ENCODE measurements at regions of chr19 and their contacts with region 1.

Region 1: DNA sequence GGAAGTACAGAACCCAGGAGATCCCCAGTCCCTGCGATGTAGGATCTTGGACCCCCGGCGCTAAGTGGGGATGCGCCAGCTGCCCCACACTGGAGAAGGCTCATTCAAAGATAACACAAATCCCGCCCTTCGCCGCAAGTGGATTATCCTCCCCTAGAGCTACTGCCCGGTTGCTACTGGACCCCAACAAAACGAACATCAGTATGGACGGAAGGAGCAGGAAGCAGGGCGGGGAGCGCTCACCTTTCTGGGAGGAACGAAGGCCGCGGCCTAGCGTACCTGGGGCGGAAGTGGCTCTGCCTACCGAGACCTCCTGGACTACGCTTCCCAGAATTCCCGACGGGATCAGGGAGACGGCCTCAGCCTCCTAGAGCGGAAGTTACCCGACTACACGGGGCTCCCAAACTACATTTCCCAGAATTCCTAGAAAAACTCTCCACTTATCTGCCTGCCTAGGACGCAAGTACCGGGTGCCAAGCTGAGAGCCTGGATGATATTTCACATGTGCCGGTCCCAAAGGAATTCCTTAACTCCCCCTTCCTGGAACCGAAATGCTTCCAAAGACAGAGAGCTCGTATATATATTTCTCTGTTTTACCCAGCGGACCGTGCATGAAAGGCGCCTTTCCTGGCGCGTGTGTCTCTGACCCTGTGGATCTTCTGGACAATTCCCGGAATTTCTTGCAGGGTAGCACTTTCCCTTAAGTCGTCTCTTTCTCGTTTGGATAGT is at the start of gene ZNF112:
- DNase-seq: peak; percentile 93
- H3K4me3 ChIP-seq: peak within 1 kb of the TSS; percentile 41 to 60 (median 58)
- H3K27ac ChIP-seq: no peak within 1 kb of the TSS
- H3K4me1 ChIP-seq: peaks cover 4% of the 10 kb centered on the region
- H3K27me3 ChIP-seq: no peaks in the 10 kb centered on the region
- CTCF ChIP-seq: no peak
- POLR2A ChIP-seq: peak; percentile 56
- total RNA-seq, gene ZNF112: 4.6 and 7.5 TPM in 2 replicates

Region 2: DNA sequence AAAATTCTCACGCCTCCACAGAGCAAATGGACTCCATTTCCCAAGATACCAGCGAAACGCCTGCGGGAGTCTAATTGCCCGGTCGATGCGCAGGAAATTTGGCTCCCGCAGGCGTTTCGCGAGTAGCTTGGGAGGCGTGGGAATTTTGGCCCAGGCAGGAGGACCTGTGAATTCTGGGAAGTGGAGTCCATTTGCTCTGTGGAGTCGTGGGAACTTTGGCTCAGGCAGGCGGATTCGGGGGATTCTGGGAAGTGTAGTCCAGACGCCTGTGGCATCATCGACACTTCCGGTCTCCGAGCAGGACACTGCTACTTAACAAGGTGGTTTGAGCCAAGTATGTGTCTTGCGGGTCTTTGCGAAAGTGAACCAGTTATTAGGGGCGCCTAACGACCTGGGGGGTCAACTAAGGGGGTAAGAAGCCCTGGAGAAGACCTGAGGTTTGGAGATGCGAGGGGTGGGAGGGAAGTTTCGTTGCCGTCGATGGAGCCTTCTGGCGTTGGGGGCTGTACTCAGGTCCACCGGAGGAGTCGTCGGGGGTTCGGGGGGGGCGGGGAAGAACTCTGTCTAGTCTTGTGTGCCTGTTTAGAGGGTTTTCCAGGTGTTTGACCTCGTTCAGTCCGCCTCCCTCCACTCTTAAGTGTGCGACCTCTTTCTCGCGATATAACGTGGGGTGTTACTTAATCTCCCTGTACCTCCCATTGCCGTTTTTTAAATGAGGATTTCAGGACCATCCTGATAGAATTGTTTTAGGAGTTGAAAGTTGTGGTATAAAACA is 372.4 kb before region 1 on chr19 and contains the start of gene ZNF155:
- CTCF ChIA-PET with region 1: no interaction called
- POLR2A ChIA-PET with region 1: no interaction called
- dilution Hi-C with region 1: no loop called
- intact Hi-C with region 1: loop called (anchors 1 kb)
- DNase-seq: peak; percentile 95
- H3K4me3 ChIP-seq: peak within 1 kb of the TSS; percentile 32 to 75 (median 68)
- H3K27ac ChIP-seq: peak within 1 kb of the TSS; percentile 23
- H3K4me1 ChIP-seq: peaks cover 6% of the 10 kb centered on the region
- H3K27me3 ChIP-seq: no peaks in the 10 kb centered on the region
- CTCF ChIP-seq: no peak
- POLR2A ChIP-seq: peak; percentile 39
- total RNA-seq, gene ZNF155: 5.9 and 7.6 TPM in 2 replicates

Region 3: DNA sequence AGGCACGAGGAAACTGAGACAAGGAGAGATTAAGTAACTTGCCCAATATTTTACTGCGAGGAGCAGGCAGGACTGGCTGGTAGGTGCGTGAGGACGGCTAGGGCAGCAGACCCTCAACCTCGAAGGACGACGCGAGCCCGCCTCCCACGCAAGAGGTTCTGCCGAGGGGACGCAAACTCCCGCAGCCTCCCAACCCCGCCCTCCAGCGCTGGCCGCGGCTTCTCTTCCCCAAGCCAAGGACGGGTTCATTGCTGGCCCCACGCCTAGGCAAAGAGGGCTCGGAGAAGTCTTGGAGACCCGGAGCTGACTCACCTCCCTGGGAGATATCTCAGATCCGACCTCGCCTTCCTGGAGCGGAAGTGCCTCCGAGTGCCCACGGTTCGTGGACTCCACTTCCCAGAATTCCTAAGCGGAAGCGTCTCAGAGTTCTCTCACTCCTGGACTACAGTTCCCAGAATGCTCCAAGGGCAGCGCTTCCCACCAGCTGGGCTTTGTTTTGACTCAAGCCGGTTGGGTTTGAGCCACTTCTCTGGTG is 51.8 kb before region 1 on chr19 and contains the start of gene ZNF235:
- CTCF ChIA-PET with region 1: no interaction called
- POLR2A ChIA-PET with region 1: no interaction called
- dilution Hi-C with region 1: no loop called
- intact Hi-C with region 1: loop called (anchors 1 kb)
- DNase-seq: peak; percentile 97
- H3K4me3 ChIP-seq: peak within 1 kb of the TSS; percentile 76 to 95 (median 82)
- H3K27ac ChIP-seq: peak within 1 kb of the TSS; percentile 63
- H3K4me1 ChIP-seq: peaks cover 5% of the 10 kb centered on the region
- H3K27me3 ChIP-seq: no peaks in the 10 kb centered on the region
- CTCF ChIP-seq: no peak
- POLR2A ChIP-seq: peak; percentile 51
- total RNA-seq, gene ZNF235: 5.2 TPM in 2 replicates

Region 4: GRCh38 chr19:44374789-44375188 is 18.2 kb after region 1 on chr19:
- CTCF ChIA-PET with region 1: no interaction called
- POLR2A ChIA-PET with region 1: no interaction called
- dilution Hi-C with region 1: no loop called
- intact Hi-C with region 1: no loop called
- DNase-seq: no peak
- H3K4me3 ChIP-seq: no peak overlapping the region
- H3K27ac ChIP-seq: no peak overlapping the region
- H3K4me1 ChIP-seq: no peaks in the 10 kb centered on the region
- H3K27me3 ChIP-seq: no peaks in the 10 kb centered on the region
- CTCF ChIP-seq: no peak
- POLR2A ChIP-seq: no peak

Region 5: DNA sequence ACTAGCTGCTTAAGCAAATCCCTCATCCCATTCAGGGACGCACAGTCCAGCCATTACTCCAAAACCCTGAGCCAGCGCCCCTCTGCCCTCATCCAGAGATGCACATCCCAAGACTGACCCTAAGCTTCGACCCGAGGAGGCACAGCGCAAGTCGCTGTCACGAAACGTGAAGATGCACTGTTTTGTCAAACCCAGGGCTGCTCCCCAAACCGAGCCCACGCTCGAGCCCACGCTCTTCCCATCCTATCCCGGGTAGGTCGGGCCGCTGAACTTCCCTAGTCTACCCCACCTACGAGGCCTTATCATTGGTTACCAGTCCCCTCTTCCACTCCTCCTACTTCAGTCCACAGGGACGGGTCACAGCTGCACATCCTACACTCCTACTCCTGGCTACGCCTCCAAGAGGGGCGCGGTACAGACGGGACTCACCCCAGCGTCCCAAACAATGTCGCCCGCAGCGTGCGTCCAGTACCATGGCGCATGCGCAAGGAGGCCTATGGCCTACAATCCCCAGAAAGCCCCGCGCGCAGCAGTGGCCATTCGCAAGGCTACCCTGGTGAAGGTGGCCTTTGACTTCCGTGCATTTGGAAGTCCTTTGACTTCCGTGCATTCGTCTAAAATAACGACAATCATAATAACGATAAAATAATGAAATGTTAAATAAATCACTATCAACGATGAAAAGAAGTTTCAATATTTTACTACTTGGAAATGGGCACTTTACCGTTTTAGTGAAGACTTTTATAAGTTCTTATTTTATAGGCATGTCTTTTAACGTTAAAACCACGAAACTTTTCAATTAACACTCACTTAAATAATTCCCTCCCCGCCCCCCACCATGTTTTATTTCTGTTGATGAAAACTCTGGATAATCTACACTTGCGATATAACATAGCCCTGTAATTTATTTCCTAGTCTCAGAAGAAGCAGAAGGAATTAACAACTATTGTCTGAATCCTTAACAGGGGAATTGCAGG is 44.9 kb after region 1 on chr19 and contains the start of gene ZNF285:
- CTCF ChIA-PET with region 1: no interaction called
- POLR2A ChIA-PET with region 1: no interaction called
- dilution Hi-C with region 1: no loop called
- intact Hi-C with region 1: loop called (anchors 1 kb)
- DNase-seq: peak; percentile 98
- H3K4me3 ChIP-seq: peak within 1 kb of the TSS; percentile 46 to 66 (median 55)
- H3K27ac ChIP-seq: no peak within 1 kb of the TSS
- H3K4me1 ChIP-seq: no peaks in the 10 kb centered on the region
- H3K27me3 ChIP-seq: no peaks in the 10 kb centered on the region
- CTCF ChIP-seq: no peak
- POLR2A ChIP-seq: peak; percentile 19
- total RNA-seq, gene ZNF285: 3.6 and 4.6 TPM in 2 replicates

Region 6: DNA sequence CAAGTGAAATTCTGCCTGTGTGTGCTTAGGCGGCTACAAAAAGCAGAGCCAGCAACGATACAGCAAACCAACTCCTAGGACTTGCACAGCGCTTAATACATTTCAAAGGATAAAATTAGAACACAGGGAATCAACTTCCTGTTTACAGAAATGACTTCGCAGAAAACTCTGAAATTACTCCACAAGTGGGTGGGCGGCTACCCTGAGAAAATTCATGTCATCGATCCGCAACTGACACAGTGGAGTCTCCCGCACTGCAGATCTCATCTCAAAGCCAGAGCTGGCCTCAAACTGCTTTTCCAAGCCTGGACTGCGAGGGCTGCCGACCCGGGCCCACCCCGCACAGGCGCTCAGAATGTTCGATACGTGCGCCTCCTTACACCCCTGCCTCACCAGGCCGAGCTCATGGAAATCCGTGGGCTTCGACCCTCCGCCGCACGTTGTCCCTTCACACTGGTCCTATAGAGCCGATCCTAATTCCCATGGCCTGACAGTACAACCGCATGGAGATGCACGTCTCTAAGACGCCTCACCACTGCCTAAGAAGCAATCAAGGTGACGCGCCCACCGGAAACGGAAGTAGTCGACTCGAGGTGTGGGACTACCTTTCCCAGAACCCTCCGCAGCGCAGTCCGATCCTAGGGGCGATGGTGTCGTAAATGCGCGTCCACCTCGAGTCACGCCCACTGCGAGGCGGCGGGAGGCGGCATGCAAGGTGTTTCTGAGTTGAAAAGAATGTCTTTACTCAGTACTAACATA is 91.5 kb after region 1 on chr19 and contains the start of gene ZNF229:
- CTCF ChIA-PET with region 1: no interaction called
- POLR2A ChIA-PET with region 1: no interaction called
- dilution Hi-C with region 1: no loop called
- intact Hi-C with region 1: loop called (anchors 1 kb)
- DNase-seq: peak; percentile 90
- H3K4me3 ChIP-seq: peak within 1 kb of the TSS; percentile 18 to 56 (median 49)
- H3K27ac ChIP-seq: no peak within 1 kb of the TSS
- H3K4me1 ChIP-seq: peaks cover 6% of the 10 kb centered on the region
- H3K27me3 ChIP-seq: no peaks in the 10 kb centered on the region
- CTCF ChIP-seq: no peak
- POLR2A ChIP-seq: no peak
- total RNA-seq, gene ZNF229: 6.0 and 8.8 TPM in 2 replicates

Region 7: DNA sequence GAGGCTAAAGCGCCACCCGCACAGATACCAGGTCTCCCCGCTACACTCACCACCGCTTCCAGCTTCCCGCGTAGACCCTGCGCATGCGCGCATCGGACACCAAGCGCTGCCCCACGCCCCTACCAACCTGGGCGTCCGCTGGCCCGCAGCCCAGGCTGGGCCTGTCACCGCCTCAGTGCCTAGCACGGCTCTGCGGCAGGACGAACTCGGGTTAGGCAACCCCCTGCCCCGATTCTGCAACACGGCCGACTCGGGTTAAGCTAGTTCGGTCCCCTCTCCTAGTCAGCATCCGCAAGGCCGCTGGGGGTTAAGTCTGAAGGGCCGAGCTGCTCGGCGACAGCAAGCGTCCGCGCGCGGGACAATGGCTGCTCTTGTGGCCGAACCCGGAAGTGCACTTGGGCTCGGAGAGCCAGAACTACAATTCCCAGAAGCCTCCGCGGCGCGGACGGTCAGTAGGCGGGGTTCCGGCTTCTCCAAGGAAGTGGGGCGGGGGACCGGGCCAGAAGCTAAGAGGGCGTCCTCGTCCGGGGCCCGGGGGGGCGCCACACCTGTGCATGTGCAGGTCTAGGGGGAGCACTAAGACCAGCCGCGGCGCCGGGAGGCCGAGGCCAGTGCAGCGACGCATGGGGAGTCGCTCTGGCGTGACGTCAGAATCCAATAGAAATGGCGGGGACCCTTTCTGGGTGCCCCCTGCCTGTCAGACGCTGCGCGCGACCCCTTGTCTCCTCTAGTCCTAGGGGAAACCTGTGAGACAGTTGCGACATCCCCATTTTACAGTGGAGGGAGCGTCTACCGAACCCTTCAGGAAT is 143.8 kb after region 1 on chr19 and contains the start of gene ZNF180:
- CTCF ChIA-PET with region 1: no interaction called
- POLR2A ChIA-PET with region 1: no interaction called
- dilution Hi-C with region 1: no loop called
- intact Hi-C with region 1: loop called (anchors 5 kb)
- DNase-seq: peak; percentile 96
- H3K4me3 ChIP-seq: peak within 1 kb of the TSS; percentile 75 to 88 (median 77)
- H3K27ac ChIP-seq: peak within 1 kb of the TSS; percentile 59
- H3K4me1 ChIP-seq: peaks cover 11% of the 10 kb centered on the region
- H3K27me3 ChIP-seq: peaks cover 0 to 2% of the 10 kb centered on the region in 2 experiments
- CTCF ChIP-seq: peak; percentile 14 to 53
- POLR2A ChIP-seq: peak; percentile 77
- total RNA-seq, gene ZNF180: 8.6 and 8.9 TPM in 2 replicates

Measured in endothelial cell of umbilical vein (primary cell).